Activated CD4-positive, alpha-beta memory T cell treated with anti-CD3 and anti-CD28 coated beads, Interleukin-2, amount 10 ng/mL, durations not matched to agents 7 days and 5 days (primary cell): ENCODE measurements at regions of chr3 and their contacts with region 1.

Region 1: GRCh38 chr3:36911990-36912804 is 32.7 kb downstream of the TRANK1 start:
- DNase-seq: peak; percentile 39
- H3K4me3 Mint-ChIP-seq: peak overlapping the region; percentile 74
- H3K27ac Mint-ChIP-seq: peak overlapping the region; percentile 90
- H3K4me1 Mint-ChIP-seq: peaks cover 41% of the 10 kb centered on the region
- H3K27me3 Mint-ChIP-seq: peaks cover 5% of the 10 kb centered on the region

Region 2: DNA sequence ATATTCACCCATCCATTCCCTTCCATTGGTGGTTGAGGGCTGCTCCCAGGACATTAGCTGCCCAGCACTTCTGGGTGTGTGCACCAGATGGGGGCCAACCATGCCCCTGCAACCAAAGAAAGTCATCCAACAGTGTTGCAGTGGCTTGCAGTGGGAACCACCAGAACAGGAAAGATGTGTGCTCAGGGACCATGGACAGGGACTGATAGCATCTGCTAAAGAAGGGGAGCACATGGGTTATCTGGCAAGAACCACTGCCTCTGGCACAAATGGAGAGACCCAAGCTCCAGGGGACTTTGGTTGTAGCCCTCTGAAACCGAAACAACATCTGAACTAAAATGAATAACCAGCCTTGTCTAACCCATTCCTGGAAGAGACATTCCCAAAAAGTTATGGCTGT is 155.9 kb before region 1 on chr3:
- CTCF ChIA-PET with region 1: no interaction called
- POLR2A ChIA-PET with region 1: no interaction called
- DNase-seq: no peak
- H3K4me3 Mint-ChIP-seq: no peak overlapping the region
- H3K27ac Mint-ChIP-seq: no peak overlapping the region
- H3K4me1 Mint-ChIP-seq: no peaks in the 10 kb centered on the region
- H3K27me3 Mint-ChIP-seq: peaks cover 34% of the 10 kb centered on the region

Region 3: DNA sequence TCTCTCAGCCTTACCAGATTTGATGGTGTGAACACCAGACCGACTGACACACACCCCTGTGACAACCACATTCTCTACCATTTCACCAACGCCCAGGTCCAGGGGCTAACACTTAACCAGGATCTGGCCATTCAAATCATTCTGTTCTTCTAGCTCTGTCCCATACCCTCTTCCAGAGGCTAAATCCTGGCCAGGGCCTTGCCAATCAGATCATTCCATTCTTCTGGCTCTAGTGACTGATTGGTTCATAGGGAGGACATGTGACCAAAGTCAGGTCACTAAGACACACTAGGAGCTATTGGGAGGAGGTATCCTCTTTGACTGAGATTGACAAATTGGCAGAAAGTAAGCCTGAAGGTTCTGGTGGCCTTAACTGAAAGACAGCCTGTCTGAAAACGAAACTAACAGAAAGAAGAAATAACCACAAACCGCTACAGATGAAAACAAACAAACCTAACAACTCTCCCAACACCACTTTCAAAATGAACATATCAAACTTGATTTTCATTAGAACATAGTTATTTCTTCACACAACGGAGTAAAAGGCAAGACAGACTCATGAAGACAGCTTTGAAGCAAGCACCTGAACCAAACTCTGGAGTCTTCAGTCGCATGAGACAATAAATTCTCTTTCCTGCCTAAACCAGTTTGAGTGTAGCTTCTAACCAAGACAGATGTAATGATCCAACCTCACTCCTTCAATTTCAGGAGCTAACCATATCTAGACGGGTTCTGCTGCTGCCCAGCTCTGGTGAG is 35.8 kb before region 1 on chr3:
- CTCF ChIA-PET with region 1: interaction called, 5 read pairs
- POLR2A ChIA-PET with region 1: interaction called, 16 read pairs
- DNase-seq: peak; percentile 38
- H3K4me3 Mint-ChIP-seq: peak overlapping the region; percentile 60
- H3K27ac Mint-ChIP-seq: peak overlapping the region; percentile 86
- H3K4me1 Mint-ChIP-seq: peaks cover 25% of the 10 kb centered on the region
- H3K27me3 Mint-ChIP-seq: peaks cover 5% of the 10 kb centered on the region

Region 4: GRCh38 chr3:36944012-36944640 is 31.9 kb after region 1 on chr3:
- CTCF ChIA-PET with region 1: interaction called, 9 read pairs
- POLR2A ChIA-PET with region 1: interaction called, 13 read pairs
- DNase-seq: peak; percentile 30
- H3K4me3 Mint-ChIP-seq: peak overlapping the region; percentile 74
- H3K27ac Mint-ChIP-seq: no peak overlapping the region
- H3K4me1 Mint-ChIP-seq: peaks cover 9% of the 10 kb centered on the region
- H3K27me3 Mint-ChIP-seq: peaks cover 4% of the 10 kb centered on the region